ENCODE measurements at regions of chr15 and their contacts with region 1.

Region 1: GRCh38 chr15:54082836-54083492 is 104.7 kb downstream of the UNC13C start:
- DNase-seq: no peak
- ATAC-seq: no peak

Region 2: DNA sequence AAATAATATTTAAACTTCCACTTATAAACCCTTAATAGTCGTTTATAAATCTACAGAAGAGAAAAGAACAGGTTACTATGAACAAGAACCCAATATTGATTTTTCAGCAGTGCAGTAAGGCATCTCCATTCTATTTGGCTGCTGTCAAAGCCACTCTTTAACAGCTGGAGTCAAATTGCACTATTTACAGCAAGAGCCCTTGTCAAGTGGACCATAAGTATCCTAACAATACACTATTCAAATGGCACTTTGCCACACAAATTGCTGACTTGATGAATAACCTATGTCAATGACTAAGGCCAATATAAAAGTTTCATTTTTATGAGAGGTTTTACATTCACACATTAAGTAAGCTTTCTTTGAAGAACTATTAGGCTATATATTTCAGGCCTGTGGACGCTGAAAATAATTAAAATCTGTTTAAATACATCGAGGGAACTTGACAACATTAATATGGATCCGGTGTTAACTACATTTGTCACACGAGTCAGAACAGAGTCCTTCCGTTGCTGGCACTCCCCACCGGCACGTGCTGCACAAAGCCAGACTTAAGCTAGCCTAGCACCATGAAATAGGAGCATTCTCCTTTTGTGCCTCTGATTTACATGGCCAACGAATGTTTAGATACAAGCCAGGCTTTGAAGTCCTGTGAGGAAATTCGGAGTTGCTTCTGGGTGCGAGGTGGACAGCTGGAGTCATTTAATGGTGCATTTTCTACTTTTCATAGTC is 424.0 kb before region 1 on chr15:
- intact Hi-C with region 1: no loop called
- DNase-seq: no peak
- ATAC-seq: no peak

Region 3: DNA sequence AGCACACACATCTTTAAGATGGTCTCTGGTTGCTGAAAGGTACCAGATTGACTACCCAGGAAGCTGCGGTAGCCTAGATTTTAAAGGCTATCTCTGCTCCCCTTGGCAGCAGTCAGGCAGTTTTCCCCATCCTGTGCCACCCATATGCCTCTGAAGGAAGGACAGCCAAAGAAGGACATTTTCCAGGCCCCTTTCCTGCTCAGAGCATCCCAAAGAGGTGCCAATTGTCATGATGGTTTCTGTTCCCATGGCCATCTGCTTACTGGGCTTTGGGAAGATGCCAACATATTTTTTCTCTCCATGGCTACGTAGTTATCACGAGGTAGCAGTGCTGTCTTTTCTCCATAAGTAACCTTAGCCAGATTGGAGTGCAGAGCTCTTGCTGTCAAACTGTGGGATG is 65.0 kb before region 1 on chr15:
- intact Hi-C with region 1: loop called (anchors 10 kb)
- DNase-seq: no peak
- ATAC-seq: no peak

Region 4: DNA sequence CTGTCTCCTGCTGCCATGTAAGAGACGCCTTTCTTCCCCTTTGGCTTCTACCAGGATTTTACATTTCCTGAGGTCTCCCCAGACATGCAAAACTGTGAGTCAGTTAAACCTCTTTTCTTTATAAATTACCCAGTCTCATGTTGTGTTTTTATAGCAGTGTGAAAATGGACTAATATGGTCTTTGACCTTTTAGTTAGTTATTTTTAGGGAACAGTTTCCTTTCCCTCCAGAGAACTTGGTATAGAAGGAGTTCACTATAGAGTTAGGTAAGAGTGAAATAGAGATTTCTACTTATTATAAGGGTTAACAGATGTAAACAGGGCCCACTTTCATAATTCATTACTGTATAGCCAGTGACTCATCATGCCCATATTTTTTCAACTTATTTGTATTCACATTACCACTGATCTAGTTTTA is 66.2 kb after region 1 on chr15:
- intact Hi-C with region 1: loop called (anchors 10 kb)
- DNase-seq: no peak
- ATAC-seq: no peak

Region 5: DNA sequence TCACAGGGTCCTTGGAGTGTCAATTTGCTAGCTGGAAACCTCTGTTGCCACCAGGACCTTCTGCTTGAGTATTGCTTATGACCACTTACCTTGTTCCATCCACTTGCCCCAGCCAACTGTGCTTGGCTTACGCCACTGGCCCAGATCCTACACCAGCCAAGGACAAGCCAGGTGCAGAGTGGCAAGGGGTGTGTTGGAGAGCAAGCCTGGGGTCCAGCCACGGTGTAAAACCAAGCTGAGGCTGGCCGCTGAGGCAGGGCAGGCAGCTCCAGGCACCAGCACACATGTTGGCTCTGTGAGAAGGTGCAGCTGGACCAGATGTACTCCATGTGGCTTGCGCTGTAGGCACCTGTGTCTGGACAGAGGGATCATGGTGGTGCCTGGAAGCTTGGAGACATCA is 143.5 kb after region 1 on chr15:
- intact Hi-C with region 1: no loop called
- DNase-seq: no peak
- ATAC-seq: no peak

Measured in left ventricle myocardium superior (tissue), 1 donor.